ENCODE measurements at regions of chr16 and their contacts with region 1.

Region 1: DNA sequence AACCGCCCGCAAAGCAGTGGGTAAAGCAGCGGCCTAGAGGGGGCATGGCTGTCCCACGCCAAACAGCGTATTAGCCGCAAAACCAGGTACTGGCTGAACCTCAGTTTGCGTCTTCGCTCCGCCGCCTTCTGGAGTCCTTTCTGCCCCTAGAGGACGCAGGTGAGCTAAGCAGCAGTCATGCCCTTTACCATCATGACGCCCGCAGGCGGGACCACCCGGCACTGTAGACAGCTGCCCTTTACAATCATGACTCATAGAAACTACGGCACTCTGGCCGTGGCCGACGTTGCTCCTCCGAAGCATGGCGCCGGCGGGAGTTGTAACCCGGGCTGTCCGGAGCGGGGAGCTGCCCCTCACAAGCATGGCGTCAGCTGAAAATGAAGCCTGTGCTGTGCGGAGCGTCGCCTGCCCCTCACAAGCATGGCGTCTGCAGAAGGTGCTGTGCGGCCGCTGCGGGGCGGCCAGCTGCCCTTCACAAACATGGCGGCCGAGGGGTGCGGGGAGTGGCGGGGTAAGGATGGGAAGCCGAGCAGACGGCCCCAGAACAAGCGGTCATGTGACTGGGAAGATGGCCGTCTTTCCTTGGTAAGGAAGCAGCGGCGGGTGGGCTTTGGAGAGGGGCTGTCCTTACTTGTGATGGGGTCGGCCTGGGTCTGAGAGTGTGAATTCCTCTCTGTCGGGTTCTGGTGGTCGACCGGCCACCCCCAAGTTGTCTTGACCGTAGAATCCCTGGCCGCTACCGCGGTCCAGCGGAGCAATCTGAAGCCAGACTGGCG is at the start of gene VPS35L:
- DNase-seq: peak; percentile 99
- ATAC-seq: peak; percentile 100
- total RNA-seq, gene VPS35L: 24.6 TPM

Region 2: GRCh38 chr16:19521471-19522396 is 33.6 kb before region 1 on chr16 and contains the start of gene GDE1:
- intact Hi-C with region 1: loop called (anchors 1 kb)
- DNase-seq: peak; percentile 98
- ATAC-seq: peak; percentile 91
- total RNA-seq, gene GDE1: 110 TPM

Region 3: DNA sequence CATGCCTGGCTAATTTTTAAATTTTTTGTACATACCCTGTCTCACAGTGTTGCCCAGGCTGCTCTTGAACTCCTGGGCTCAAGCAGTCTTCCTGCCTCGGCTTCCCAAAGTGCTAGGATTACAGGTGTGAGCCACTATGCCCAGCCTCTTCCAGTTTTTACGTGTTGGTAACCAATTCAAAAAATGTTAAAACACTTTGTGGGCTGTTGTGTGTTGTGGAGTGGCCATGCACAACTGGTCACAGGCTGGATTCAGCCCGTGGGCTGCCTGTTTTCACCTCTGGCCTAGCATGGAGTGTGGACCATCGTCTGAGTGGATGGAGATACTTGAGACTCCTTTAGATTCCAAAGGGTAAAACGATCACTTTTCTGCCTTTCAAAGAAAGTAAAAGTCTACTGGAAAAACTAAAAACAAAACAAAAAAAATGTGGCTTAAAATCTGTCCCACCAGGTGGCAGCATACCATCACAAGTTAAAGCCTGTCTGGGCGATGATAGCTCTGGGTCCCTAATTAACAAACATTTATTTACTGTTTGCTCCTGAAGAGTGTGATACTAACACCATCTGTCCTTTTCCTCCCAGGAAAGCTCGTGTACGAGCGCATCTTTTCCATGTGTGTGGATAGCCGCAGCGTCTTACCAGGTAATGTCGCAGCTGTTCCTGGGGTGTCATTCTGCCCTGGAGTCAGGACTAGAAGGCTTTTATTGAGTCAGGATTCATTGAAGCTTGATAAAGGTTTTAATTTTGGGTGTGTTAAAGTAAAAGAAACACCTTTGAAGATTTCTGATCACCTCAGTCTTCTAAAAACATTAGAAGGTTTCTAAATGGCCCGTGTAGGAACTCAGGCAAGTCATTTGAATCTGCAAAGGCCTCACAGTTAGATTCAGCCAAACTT is 46.0 kb after region 1 on chr16:
- intact Hi-C with region 1: loop called (anchors 5 kb)
- DNase-seq: no peak
- ATAC-seq: no peak

Region 4: GRCh38 chr16:20383106-20384029 is 828.0 kb after region 1 on chr16:
- intact Hi-C with region 1: loop called (anchors 10 kb)
- DNase-seq: no peak
- ATAC-seq: peak; percentile 51